Ascending aorta (tissue), 2 donors: ENCODE measurements at regions of chr7 and their contacts with region 1.

Region 1: GRCh38 chr7:155003376-155004214 is 671 bp upstream of the PAXIP1 start:
- DNase-seq: peak; percentile 18 to 85
- H3K4me3 ChIP-seq: peak overlapping the region; percentile 80 to 91
- H3K27ac ChIP-seq: peak overlapping the region; percentile 78 to 84
- H3K4me1 ChIP-seq: no peaks in the 10 kb centered on the region
- H3K27me3 ChIP-seq: no peaks in the 10 kb centered on the region
- CTCF ChIP-seq: no peak

Region 2: GRCh38 chr7:155644178-155644970 is 640.8 kb after region 1 on chr7 and contains the start of gene RBM33:
- intact Hi-C with region 1: loop called (anchors 10 kb)
- DNase-seq: peak in 1 of 2 donors; percentile 80
- H3K4me3 ChIP-seq: peak within 1 kb of the TSS; percentile 93 to 100
- H3K27ac ChIP-seq: peak within 1 kb of the TSS; percentile 94
- H3K4me1 ChIP-seq: peaks cover 0 to 13% of the 10 kb centered on the region in 2 donors
- H3K27me3 ChIP-seq: no peaks in the 10 kb centered on the region
- CTCF ChIP-seq: no peak
- total RNA-seq, gene RBM33: 44.2 TPM